Activated T-helper 1 cell treated with anti-CD3 and anti-CD28 coated beads, Interleukin-12 subunit alpha, Interleukin-12 subunit beta, Interleukin-2, Interleukin-4 antibody, amounts not matched to agents 30 ng/mL and 10 ng/mL and 1 ng/mL, durations not matched to agents 14 hours and 24 hours and 36 hours (primary cell): ENCODE measurements at regions of chr20 and their contacts with region 1.

Region 1: GRCh38 chr20:63272584-63273579 is at the start of gene ARFGAP1:
- DNase-seq: peak; percentile 86
- H3K4me3 Mint-ChIP-seq: peak within 1 kb of the TSS; percentile 98
- H3K27ac Mint-ChIP-seq: peak within 1 kb of the TSS; percentile 89
- H3K4me1 Mint-ChIP-seq: peaks cover 23% of the 10 kb centered on the region
- H3K27me3 Mint-ChIP-seq: peaks cover 3% of the 10 kb centered on the region
- total RNA-seq, gene ARFGAP1: 102 and 107 TPM in 2 replicates

Region 2: DNA sequence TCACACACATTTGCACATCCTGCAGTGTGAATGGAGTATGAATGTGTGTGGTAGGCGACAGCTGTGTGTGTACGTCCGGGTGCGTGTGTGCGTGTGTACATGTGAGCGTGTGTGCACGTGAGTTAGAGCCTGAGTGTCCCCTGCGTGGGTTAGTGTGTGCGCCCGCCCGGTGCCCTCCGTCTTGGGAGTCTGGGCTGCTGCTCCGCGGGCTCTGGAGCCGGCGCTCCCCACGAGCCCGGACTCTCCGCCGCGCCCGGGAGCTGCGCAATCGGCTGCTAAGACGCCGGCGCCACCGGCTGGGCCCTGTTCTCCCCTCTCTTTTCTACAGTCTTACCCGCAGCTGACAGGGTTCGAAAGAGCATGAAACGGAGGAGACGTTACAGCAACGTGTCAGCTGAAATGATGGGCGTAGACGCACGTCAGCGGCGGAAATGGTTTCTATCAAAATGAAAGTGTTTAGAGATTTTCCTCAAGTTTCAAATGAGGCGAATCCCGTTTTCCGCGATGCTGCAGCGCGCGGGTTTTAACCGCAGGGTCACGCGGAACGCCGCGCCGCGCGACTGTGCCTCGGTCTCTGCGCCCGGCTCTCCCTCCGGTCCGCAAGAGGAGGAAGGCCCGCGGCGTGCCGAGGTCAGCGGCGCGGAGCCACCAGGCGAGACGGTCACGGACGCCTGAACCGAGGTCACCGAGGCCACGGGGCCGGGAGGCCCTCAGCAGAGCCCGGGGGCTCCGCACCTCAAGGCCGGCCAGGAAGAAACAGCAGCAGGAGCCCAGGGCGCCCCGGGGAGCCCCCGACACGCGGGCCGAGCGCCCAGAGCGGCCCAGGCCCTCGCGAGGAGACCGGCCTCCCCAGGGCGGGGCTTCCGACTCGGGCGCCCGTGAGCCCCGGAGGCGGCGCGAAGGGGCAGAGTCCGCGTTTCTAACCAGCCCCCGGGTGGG is 170.8 kb before region 1 on chr20:
- intact Hi-C with region 1: no loop called
- DNase-seq: peak; percentile 45
- H3K4me3 Mint-ChIP-seq: peak overlapping the region; percentile 86
- H3K27ac Mint-ChIP-seq: peak overlapping the region; percentile 77
- H3K4me1 Mint-ChIP-seq: no peaks in the 10 kb centered on the region
- H3K27me3 Mint-ChIP-seq: peaks cover 2% of the 10 kb centered on the region

Region 3: DNA sequence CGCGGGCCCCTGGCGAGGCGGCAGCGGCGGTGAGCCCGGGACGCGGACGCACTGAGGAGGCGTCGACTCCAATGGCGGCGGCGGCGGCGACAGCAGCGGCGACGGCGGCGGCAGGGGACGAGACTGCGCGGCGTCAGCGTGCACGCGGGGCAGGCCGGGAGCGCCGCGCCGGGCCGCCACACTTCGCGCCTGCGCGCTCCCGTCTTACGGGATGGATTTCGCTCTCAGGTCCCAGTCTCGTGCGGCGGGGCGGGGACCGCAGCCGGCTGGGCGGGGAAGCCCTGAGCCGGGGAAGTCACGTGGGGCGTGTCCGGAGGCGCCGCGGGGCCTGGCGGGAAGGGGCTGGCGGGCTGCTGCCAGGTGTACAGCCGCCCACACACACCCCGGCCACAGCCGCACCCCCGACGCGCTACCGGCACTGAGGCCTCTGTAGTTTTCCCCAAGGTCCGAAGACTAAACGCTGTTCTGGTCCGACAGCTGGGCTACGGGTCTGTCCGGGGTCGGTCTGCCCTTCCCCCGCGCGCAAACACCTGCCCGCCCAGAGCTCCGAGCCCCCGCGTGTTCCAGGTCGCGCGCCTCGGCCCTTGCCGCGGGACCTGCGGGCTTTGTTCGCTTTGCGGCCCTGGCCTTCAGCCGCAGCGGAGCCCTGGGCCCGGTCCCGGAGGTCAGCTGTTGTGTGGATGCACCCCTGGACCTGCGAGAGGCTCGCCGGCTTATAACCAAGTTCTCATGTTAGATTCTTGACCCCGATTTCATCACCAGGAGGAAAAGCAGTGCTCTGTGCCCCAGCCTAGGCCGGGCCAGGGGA is 56.6 kb before region 1 on chr20 and contains the start of gene YTHDF1:
- intact Hi-C with region 1: loop called (anchors 1 kb)
- DNase-seq: peak; percentile 97
- H3K4me3 Mint-ChIP-seq: peak within 1 kb of the TSS; percentile 98
- H3K27ac Mint-ChIP-seq: peak within 1 kb of the TSS; percentile 89
- H3K4me1 Mint-ChIP-seq: peaks cover 47% of the 10 kb centered on the region
- H3K27me3 Mint-ChIP-seq: no peaks in the 10 kb centered on the region
- total RNA-seq, gene YTHDF1: 48.8 and 49.0 TPM in 2 replicates

Region 4: DNA sequence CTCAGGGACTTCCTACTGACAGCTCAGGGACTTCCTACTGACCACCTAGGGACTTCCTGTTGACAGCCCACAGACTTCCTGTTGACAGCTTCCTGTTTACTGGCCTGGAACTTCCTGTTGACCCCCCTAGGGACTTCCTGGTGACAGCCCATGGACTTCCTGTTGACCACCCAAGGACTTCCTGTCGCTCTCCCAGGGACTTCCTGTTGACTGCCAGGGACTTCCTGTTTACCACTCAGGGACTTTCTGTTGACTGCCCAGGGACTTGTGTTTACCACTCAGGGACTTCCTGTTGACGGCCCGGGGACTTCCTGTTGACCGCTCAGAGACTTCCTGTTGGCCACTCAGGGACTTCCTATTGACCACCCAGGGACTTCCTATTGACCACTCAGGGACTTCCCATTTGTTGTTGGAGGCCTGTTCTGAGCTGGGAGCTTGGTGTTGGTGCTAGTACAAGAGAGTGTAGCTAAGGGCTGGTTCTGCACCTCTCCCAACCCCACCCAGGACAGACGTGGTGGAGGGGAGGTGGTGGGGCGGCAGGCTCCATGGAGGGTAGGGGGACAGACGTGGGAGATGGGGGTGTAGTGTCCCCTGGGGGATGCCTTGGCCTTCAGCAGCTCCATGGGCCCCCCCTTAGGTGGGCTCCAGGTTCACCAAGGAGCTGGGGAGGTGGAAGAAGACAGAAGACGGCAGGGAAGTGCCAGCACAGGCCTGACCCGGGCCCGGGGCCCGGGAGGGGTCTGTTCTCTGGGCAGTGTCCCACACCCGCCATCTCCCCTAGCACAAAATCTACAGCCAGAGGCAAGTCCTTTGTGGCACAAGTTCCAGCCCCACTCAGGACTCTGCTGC is 54.2 kb after region 1 on chr20:
- intact Hi-C with region 1: no loop called
- DNase-seq: no peak
- H3K4me3 Mint-ChIP-seq: no peak overlapping the region
- H3K27ac Mint-ChIP-seq: peak overlapping the region; percentile 65
- H3K4me1 Mint-ChIP-seq: no peaks in the 10 kb centered on the region
- H3K27me3 Mint-ChIP-seq: peaks cover 6% of the 10 kb centered on the region

Region 5: GRCh38 chr20:63442100-63442493 is 169.2 kb after region 1 on chr20:
- intact Hi-C with region 1: loop called (anchors 2 kb)
- DNase-seq: peak; percentile 35
- H3K4me3 Mint-ChIP-seq: no peak overlapping the region
- H3K27ac Mint-ChIP-seq: no peak overlapping the region
- H3K4me1 Mint-ChIP-seq: peaks cover 16% of the 10 kb centered on the region
- H3K27me3 Mint-ChIP-seq: peaks cover 6% of the 10 kb centered on the region

Region 6: GRCh38 chr20:63461104-63461763 is 188.4 kb after region 1 on chr20:
- intact Hi-C with region 1: no loop called
- DNase-seq: no peak
- H3K4me3 Mint-ChIP-seq: no peak overlapping the region
- H3K27ac Mint-ChIP-seq: no peak overlapping the region
- H3K4me1 Mint-ChIP-seq: no peaks in the 10 kb centered on the region
- H3K27me3 Mint-ChIP-seq: peaks cover 6% of the 10 kb centered on the region

Region 7: DNA sequence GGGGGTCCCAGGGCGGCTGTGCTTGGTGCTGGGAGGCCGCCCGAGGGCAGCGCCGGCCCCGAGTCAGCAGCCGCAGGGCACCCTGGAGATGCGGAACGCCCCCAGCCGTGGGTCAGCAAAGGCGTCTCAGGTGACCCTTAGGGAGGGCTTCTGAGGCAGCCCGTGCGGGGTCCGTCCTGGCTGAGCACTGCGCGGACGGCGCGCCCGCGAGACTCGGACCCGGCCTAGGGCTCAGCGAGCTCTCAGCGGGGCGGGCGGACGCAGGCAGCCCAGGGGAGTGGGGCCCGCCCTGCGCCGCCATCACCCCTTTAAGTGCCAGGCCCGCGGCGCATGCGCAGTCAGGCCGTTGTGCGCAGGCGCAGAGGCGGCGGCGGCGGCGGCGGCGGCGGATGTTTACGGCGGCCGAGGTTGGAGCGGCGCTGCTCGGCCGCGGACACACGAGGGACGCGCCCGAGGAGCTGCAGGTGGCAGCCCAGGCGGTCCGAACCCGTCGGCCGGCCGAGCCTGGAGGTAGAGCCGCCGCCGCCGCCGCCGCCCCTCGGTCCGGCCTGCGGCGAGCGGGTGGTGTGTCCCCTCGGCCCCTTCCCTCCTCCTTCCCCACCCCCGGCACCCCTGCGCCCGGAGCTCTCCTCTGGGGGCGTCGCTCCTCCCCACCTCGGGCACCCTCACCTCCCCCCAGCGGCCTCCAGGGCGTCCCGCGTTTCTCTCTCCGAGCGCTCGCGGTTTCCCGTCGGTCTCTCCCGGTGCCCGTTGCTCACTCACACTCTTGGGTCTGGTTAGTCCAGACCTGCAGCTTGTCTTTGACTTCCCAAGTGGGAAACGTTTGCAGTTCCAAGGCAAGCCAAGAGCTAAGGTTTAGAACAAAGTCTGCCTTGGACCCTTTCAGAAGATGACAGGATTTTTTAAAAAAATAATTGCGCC is 982.7 kb after region 1 on chr20 and contains the start of gene PCMTD2:
- intact Hi-C with region 1: loop called (anchors 5 kb)
- DNase-seq: peak; percentile 86
- H3K4me3 Mint-ChIP-seq: peak within 1 kb of the TSS; percentile 98
- H3K27ac Mint-ChIP-seq: peak within 1 kb of the TSS; percentile 97
- H3K4me1 Mint-ChIP-seq: peaks cover 46% of the 10 kb centered on the region
- H3K27me3 Mint-ChIP-seq: peaks cover 9% of the 10 kb centered on the region
- total RNA-seq, gene PCMTD2: 32.2 and 39.5 TPM in 2 replicates